ENCODE measurements at regions of chr1 and their contacts with region 1.

Region 1: DNA sequence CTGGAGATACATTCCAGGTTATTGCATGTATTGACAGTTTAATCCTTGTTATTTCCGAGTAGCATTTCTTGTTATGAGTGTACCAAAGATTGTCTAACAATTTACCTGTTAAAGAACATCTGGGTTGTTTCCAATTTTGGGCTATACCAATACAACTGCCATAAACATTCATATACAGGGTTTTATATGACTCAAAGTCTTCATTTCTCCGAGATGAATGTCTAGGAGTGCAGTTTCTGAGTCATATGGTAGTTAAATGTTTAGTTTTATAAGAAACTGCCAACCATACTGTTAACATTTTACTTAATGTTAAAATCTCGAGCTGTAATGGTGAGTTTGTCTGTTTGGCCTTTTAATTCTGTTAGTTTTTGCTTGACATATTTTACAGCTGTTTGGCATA is 10.0 kb downstream of the RAB4A start:
- DNase-seq: no peak
- H3K4me3 Mint-ChIP-seq: no peak overlapping the region
- H3K27ac Mint-ChIP-seq: peak overlapping the region; percentile 7
- H3K4me1 Mint-ChIP-seq: peaks cover 37% of the 10 kb centered on the region
- H3K27me3 Mint-ChIP-seq: no peaks in the 10 kb centered on the region

Region 2: GRCh38 chr1:229270547-229271447 is 10.1 kb before region 1 on chr1 and contains the start of gene RAB4A:
- CTCF ChIA-PET with region 1: no interaction called
- POLR2A ChIA-PET with region 1: no interaction called
- intact Hi-C with region 1: loop called (anchors 1 kb)
- DNase-seq: peak; percentile 79
- H3K4me3 Mint-ChIP-seq: peak within 1 kb of the TSS; percentile 86
- H3K27ac Mint-ChIP-seq: peak within 1 kb of the TSS; percentile 43
- H3K4me1 Mint-ChIP-seq: peaks cover 34% of the 10 kb centered on the region
- H3K27me3 Mint-ChIP-seq: no peaks in the 10 kb centered on the region
- total RNA-seq, gene RAB4A: 22.9 to 25.9 TPM

Region 3: GRCh38 chr1:229341774-229342655 is 61.1 kb after region 1 on chr1:
- CTCF ChIA-PET with region 1: interaction called, 3 read pairs
- POLR2A ChIA-PET with region 1: no interaction called
- intact Hi-C with region 1: loop called (anchors 2 kb)
- DNase-seq: peak; percentile 83
- H3K4me3 Mint-ChIP-seq: peak overlapping the region; percentile 81
- H3K27ac Mint-ChIP-seq: peak overlapping the region; percentile 70
- H3K4me1 Mint-ChIP-seq: peaks cover 54% of the 10 kb centered on the region
- H3K27me3 Mint-ChIP-seq: peaks cover 7% of the 10 kb centered on the region

Region 4: DNA sequence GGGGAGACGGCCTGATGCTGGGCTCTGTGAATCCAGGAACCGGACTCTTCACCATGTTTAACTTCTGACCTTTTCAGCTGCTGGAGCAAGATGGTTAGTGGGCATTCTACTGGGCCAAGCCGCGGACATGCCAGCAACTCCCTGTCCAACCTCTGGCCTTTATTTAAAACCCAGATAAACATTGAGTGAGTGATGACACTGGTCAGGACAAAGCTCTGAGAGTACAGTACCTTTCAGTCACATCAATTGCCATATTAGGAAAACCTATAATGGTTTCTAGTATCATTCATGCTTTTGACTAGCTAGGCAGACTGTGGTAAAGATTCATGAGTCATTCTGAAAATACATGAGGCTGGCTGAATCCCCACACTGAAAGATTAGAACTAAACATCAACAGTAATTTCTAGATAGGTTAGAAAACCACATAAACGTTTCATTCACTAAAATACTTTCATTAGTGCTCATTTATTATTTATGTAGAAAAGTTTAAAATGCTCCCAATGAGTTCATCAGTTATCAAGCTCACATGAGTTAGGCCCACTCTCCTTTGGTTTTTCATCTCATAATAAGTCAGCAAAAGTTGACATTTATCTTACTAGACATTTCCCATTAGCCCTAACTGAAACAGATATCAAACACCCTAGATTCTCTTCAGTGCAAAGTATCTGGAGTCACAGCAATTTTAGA is 160.1 kb after region 1 on chr1:
- CTCF ChIA-PET with region 1: interaction called, 3 read pairs
- POLR2A ChIA-PET with region 1: interaction called, 4 read pairs
- intact Hi-C with region 1: loop called (anchors 1 kb)
- DNase-seq: no peak
- H3K4me3 Mint-ChIP-seq: no peak overlapping the region
- H3K27ac Mint-ChIP-seq: peak overlapping the region; percentile 56
- H3K4me1 Mint-ChIP-seq: peaks cover 22% of the 10 kb centered on the region
- H3K27me3 Mint-ChIP-seq: peaks cover 17% of the 10 kb centered on the region